Endothelial cell of umbilical vein (primary cell): ENCODE measurements at regions of chr5 and their contacts with region 1.

Region 1: GRCh38 chr5:178965465-178966055 is 24.6 kb downstream of the ZNF454 start:
- DNase-seq: no peak
- H3K4me3 ChIP-seq: no peak overlapping the region
- H3K27ac ChIP-seq: no peak overlapping the region
- H3K4me1 ChIP-seq: no peaks in the 10 kb centered on the region
- H3K27me3 ChIP-seq: no peaks in the 10 kb centered on the region
- CTCF ChIP-seq: no peak
- POLR2A ChIP-seq: no peak

Region 2: GRCh38 chr5:179313849-179314521 is 348.4 kb after region 1 on chr5:
- CTCF ChIA-PET with region 1: no interaction called
- POLR2A ChIA-PET with region 1: interaction called, 10 read pairs
- dilution Hi-C with region 1: no loop called
- intact Hi-C with region 1: no loop called
- DNase-seq: no peak
- H3K4me3 ChIP-seq: no peak overlapping the region
- H3K27ac ChIP-seq: no peak overlapping the region
- H3K4me1 ChIP-seq: no peaks in the 10 kb centered on the region
- H3K27me3 ChIP-seq: no peaks in the 10 kb centered on the region
- CTCF ChIP-seq: no peak
- POLR2A ChIP-seq: no peak